Psoas muscle (tissue), 8 donors: ENCODE measurements at regions of chr10 and their contacts with region 1.

Region 1: DNA sequence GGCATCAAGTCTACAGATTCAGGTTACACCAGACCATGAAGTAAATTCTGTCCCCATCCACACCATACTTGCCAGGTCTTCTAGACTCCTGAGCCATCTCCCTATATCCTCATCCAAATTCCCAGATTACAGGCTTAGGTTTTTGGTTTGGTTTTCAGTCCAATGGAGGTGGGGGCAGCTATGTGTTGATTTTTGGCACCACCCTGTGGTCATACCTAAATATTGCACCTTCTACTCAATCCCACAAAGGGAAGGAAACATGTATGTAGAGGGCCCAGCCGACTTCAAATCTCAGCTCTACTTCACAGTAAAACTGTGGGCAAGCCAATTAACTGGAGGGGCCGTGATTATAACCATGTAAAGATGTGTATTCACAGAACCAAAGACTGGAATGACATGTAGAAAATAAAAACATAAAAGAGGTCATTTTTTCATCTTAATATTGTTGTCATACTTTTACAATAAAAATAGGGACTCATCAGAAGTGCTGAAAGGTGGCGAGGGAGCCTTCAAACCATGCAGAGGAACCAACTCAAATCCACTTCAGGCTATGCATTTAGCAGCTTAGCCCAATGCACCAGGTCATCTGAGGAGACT is 19.8 kb downstream of the ERCC6 start:
- DNase-seq: no peak
- ATAC-seq: peak; percentile 74 to 90 (median 80)
- H3K4me3 ChIP-seq: no peak overlapping the region
- H3K27ac ChIP-seq: no peak overlapping the region
- H3K4me1 ChIP-seq: peaks cover 15% of the 10 kb centered on the region
- H3K27me3 ChIP-seq: no peaks in the 10 kb centered on the region
- CTCF ChIP-seq: peak; percentile 73

Region 2: GRCh38 chr10:48976196-48976595 is 542.9 kb before region 1 on chr10:
- intact Hi-C with region 1: loop called (anchors 5 kb)
- DNase-seq: no peak
- ATAC-seq: peak in 2 of 4 donors; percentile 35 to 39
- H3K4me3 ChIP-seq: no peak overlapping the region
- H3K27ac ChIP-seq: no peak overlapping the region
- H3K4me1 ChIP-seq: no peaks in the 10 kb centered on the region
- H3K27me3 ChIP-seq: no peaks in the 10 kb centered on the region
- CTCF ChIP-seq: peak; percentile 22

Region 3: GRCh38 chr10:48981310-48981907 is 537.7 kb before region 1 on chr10:
- intact Hi-C with region 1: loop called (anchors 5 kb)
- DNase-seq: peak; percentile 64 to 76
- ATAC-seq: peak; percentile 89 to 95 (median 90)
- H3K4me3 ChIP-seq: no peak overlapping the region
- H3K27ac ChIP-seq: no peak overlapping the region
- H3K4me1 ChIP-seq: no peaks in the 10 kb centered on the region
- H3K27me3 ChIP-seq: no peaks in the 10 kb centered on the region
- CTCF ChIP-seq: peak; percentile 84

Region 4: DNA sequence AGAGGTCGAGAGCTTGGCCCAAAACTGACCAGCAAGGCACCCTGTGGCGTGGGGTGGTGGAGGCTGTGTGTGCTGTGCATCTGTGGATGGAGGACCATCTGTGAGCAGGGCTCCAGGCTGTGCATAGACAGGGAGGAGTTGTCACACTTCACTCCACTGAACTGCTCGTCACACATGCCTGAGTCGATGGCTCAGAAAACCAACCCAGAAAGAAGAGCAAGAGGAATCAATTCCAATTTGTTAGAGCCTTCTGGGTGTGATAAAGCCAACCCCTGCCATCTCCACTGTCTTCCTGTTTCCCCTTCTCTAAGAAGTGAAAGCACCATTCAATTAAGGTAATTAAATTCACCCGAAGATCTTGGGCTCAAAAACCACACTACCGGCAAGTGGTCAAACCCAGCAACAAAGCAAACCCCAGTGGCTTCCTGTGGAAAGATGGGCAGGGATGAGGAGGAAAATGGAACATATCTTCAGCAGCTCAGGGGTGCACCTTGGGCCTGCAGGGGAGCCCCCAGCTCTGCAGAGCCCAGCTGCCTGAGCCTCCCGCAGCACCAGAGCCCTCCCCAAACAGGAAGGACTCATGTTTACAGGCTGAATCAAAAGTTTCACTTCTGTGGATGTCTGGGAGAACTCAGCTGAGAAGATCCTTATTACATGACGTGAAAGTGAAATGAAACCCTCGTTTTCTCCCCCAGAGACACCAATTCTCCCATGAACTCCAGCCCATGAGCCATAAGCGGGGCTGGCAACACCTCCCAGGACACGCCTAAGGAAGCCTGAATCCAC is 209.3 kb before region 1 on chr10:
- intact Hi-C with region 1: loop called in 1 of 2 experiments (anchors 10 kb)
- DNase-seq: no peak
- ATAC-seq: no peak
- H3K4me3 ChIP-seq: no peak overlapping the region
- H3K27ac ChIP-seq: peak overlapping the region; percentile 75
- H3K4me1 ChIP-seq: peaks cover 50% of the 10 kb centered on the region
- H3K27me3 ChIP-seq: no peaks in the 10 kb centered on the region
- CTCF ChIP-seq: no peak

Region 5: DNA sequence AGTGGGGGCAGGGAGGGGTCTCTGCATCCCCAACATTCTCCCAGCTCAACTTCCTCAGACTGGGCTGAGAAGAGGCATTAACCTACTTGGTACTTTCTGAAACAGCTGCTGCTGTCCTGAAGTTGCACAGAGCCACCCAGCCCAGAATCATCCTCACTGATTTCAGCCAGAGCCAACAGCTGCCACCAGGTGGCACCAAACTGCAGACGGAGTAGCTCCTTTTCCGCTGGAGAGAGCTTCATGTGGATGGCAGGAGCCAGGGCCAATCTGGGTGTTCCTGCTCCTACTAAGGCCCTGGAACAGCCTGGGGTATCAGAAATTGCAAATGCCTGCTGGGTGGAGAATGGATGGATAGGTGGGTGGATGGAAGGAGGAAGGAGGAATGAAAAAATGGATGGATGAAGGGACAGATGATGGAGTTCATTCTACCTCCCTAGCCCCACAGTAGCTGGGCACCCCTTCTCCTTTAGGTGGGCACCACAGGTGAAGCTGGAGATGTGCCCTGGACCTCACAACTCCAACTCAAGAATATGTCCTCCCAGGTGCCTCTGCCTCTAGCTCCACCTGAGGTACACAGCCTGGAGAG is 111.4 kb before region 1 on chr10:
- intact Hi-C with region 1: loop called (anchors 2 to 5 kb)
- DNase-seq: peak; percentile 73 to 84
- ATAC-seq: peak; percentile 83 to 94 (median 88)
- H3K4me3 ChIP-seq: no peak overlapping the region
- H3K27ac ChIP-seq: no peak overlapping the region
- H3K4me1 ChIP-seq: no peaks in the 10 kb centered on the region
- H3K27me3 ChIP-seq: peaks cover 0 to 7% (median 2%) of the 10 kb centered on the region in 3 donors
- CTCF ChIP-seq: peak; percentile 80